ENCODE measurements at regions of chr21 and their contacts with region 1.

Region 1: GRCh38 chr21:26954662-26955121 is 12.2 kb downstream of the ADAMTS5 start:
- DNase-seq: no peak
- H3K4me3 ChIP-seq: no peak overlapping the region
- H3K27ac ChIP-seq: no peak overlapping the region
- H3K27me3 ChIP-seq: no peaks in the 10 kb centered on the region
- CTCF ChIP-seq: no peak

Region 2: DNA sequence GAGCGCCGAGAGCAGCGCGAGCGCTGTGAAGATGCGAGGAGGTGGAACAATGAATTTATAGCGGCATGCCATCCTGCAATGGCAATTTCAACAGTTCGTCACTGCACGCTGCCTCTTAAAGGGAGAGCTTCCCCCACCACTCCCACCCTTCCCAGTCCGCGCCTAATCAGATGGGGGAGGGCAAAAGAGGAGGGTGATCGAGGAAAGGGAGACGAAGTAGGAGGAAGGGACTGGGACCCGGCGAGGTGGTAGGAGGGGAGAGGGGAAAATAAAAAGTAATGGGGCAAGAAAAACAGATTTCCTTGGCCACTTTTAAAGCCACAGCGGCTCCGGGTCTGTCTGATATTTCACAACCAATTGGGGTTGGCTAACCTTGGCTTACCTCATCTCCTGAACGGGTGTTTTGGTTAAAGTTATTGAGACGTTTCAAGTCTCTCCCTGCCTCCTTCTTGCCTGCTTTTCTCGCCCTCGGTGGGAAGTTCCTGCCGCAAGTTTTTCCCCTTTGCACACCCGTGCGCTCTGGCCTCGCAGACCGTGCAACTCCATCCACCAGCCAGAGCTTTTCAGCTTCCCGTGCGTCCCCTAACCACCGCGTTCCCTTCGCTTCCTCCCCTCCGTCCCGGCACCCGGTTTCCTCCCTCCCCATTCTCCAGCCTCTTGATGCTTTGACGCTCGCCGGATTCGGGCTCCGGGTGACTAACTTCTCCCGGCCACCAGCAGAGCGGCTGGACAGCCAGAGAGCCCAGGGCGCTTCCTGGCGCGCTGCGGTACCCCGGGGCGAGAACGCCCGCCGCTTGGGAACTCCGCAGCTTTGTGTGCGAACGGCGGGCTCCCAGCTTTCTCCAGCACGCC is 12.6 kb after region 1 on chr21 and contains the start of gene ADAMTS5:
- CTCF ChIA-PET with region 1: no interaction called
- POLR2A ChIA-PET with region 1: interaction called, 14 read pairs
- DNase-seq: no peak
- H3K4me3 ChIP-seq: peak within 1 kb of the TSS; percentile 73
- H3K27ac ChIP-seq: peak within 1 kb of the TSS; percentile 60
- H3K27me3 ChIP-seq: no peaks in the 10 kb centered on the region
- CTCF ChIP-seq: peak; percentile 16; the same call in 1 of the 2 replicates
- polyA plus RNA-seq, gene ADAMTS5: 3.1 and 4.1 TPM in 2 replicates

Region 3: GRCh38 chr21:27149034-27149433 is 194.3 kb after region 1 on chr21:
- CTCF ChIA-PET with region 1: no interaction called
- POLR2A ChIA-PET with region 1: no interaction called
- DNase-seq: no peak
- H3K4me3 ChIP-seq: no peak overlapping the region
- H3K27ac ChIP-seq: no peak overlapping the region
- H3K27me3 ChIP-seq: no peaks in the 10 kb centered on the region
- CTCF ChIP-seq: no peak

Region 4: GRCh38 chr21:27164202-27165177 is 209.8 kb after region 1 on chr21:
- CTCF ChIA-PET with region 1: no interaction called
- POLR2A ChIA-PET with region 1: interaction called, 11 read pairs
- DNase-seq: no peak
- H3K4me3 ChIP-seq: no peak overlapping the region
- H3K27ac ChIP-seq: no peak overlapping the region
- H3K27me3 ChIP-seq: no peaks in the 10 kb centered on the region
- CTCF ChIP-seq: no peak

Region 5: GRCh38 chr21:27339902-27340301 is 385.2 kb after region 1 on chr21:
- CTCF ChIA-PET with region 1: no interaction called
- POLR2A ChIA-PET with region 1: no interaction called
- DNase-seq: no peak
- H3K4me3 ChIP-seq: no peak overlapping the region
- H3K27ac ChIP-seq: no peak overlapping the region
- H3K27me3 ChIP-seq: no peaks in the 10 kb centered on the region
- CTCF ChIP-seq: no peak